GM12878 (cell line): ENCODE measurements at regions of chr18 and their contacts with region 1.

Region 1: DNA sequence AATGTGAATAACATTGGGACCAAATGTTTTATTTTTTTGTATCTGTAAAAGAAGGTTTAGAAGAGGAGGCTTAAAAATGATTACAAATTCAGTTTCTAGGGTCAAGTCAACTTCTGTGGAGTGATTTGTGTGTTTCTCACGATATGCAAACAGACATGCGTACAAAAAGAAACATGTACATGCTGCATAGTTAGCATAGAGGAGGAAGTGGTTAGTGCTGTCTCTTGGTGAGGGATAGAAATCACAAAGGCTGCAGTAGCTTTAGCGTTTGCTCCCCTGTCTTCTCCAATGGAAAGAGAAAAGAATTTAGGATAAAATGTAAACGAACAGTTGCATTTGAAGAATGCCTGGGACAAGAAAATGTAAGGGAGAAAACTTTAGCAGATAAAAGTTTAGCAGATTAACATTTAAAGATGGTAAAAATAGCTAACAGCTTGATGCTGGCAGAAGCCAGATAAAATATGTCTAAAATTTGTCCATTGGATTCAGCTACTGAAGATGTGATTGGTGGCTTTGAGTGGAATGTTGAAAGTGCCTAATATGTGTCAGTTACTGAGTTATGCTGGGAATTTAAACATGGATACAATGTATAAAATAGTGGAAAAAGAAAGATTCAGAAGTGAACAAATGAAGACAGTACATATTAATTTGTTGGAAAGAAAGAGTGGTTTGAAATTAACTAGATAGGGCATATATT is 44.9 kb downstream of the MALT1 start:
- DNase-seq: no peak
- ATAC-seq: peak; percentile 78
- H3K4me3 ChIP-seq: no peak overlapping the region
- H3K27ac ChIP-seq: peak overlapping the region; percentile 41; the same call in 1 of the 2 replicates
- H3K4me1 ChIP-seq: peaks cover 9% of the 10 kb centered on the region; the same call in 1 of the 2 replicates
- H3K27me3 ChIP-seq: no peaks in the 10 kb centered on the region
- CTCF ChIP-seq: no peak
- EP300 ChIP-seq: no peak
- POLR2A ChIP-seq: no peak
- RAD21 ChIP-seq: no peak

Region 2: GRCh38 chr18:58699551-58699950 is 16.7 kb before region 1 on chr18:
- CTCF ChIA-PET with region 1: interaction called, 4 read pairs
- POLR2A ChIA-PET with region 1: interaction called, 6 read pairs
- RAD21 ChIA-PET with region 1: interaction called, 7 read pairs
- SMC1A ChIA-PET with region 1: interaction called, 44 read pairs
- in situ Hi-C with region 1: no loop called
- intact Hi-C with region 1: no loop called
- DNase-seq: no peak
- ATAC-seq: no peak
- H3K4me3 ChIP-seq: no peak overlapping the region
- H3K27ac ChIP-seq: no peak overlapping the region
- H3K4me1 ChIP-seq: no peaks in the 10 kb centered on the region; the same call in 1 of the 2 replicates
- H3K27me3 ChIP-seq: no peaks in the 10 kb centered on the region
- CTCF ChIP-seq: no peak
- EP300 ChIP-seq: no peak
- POLR2A ChIP-seq: no peak
- RAD21 ChIP-seq: no peak